MCF 10A (cell line): ENCODE measurements at regions of chr7 and their contacts with region 1.

Region 1: GRCh38 chr7:99558306-99559174 is at the start of gene ZNF655:
- DNase-seq: peak; percentile 85
- H3K4me3 Mint-ChIP-seq: peak within 1 kb of the TSS; percentile 85
- H3K27ac Mint-ChIP-seq: peak within 1 kb of the TSS; percentile 86
- H3K4me1 Mint-ChIP-seq: peaks cover 33% of the 10 kb centered on the region
- H3K27me3 Mint-ChIP-seq: no peaks in the 10 kb centered on the region
- CTCF ChIP-seq: no peak
- total RNA-seq, gene ZNF655: 85.2 and 89.9 TPM in 2 replicates

Region 2: GRCh38 chr7:99465421-99465768 is 93.1 kb before region 1 on chr7:
- CTCF ChIA-PET with region 1: no interaction called
- POLR2A ChIA-PET with region 1: interaction called, 17 read pairs
- intact Hi-C with region 1: no loop called
- DNase-seq: peak; percentile 14
- H3K4me3 Mint-ChIP-seq: peak overlapping the region; percentile 89
- H3K27ac Mint-ChIP-seq: peak overlapping the region; percentile 98
- H3K4me1 Mint-ChIP-seq: peaks cover 15% of the 10 kb centered on the region
- H3K27me3 Mint-ChIP-seq: no peaks in the 10 kb centered on the region
- CTCF ChIP-seq: no peak

Region 3: GRCh38 chr7:99571768-99572167 is 13.2 kb after region 1 on chr7:
- CTCF ChIA-PET with region 1: no interaction called
- POLR2A ChIA-PET with region 1: interaction called, 23 read pairs
- intact Hi-C with region 1: no loop called
- DNase-seq: no peak
- H3K4me3 Mint-ChIP-seq: no peak overlapping the region
- H3K27ac Mint-ChIP-seq: peak overlapping the region; percentile 46
- H3K4me1 Mint-ChIP-seq: no peaks in the 10 kb centered on the region
- H3K27me3 Mint-ChIP-seq: no peaks in the 10 kb centered on the region
- CTCF ChIP-seq: no peak

Region 4: DNA sequence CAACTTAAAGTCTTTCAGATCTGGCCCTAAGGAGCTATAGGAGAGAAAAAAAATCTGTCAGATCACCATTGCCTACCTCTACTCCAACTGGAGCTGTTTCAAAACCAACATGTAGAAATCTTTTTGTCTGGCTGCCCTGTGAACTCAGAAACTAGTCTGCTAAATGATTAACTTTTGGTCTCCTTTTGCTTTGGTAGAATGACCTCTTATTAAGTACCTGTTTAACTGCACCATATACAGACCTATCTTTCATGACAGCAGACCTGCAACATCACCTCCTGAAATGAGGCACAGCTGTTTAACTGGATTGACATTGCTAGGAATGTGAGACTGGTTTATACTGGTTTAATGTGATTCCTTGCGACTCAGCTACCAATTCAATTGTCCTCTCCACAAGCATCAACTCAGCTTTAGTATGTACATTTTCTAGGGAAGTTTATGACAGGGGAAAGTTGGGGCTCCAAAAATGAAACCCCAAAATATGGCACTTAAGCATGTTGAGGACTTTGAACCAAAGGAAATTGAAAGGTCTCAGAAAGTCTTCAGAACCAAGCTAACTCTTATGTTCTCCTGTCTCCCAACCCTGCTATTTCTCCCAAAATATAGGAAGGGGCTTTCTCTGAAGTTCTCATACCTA is 271.1 kb after region 1 on chr7:
- CTCF ChIA-PET with region 1: no interaction called
- POLR2A ChIA-PET with region 1: interaction called, 14 read pairs
- intact Hi-C with region 1: no loop called
- DNase-seq: no peak
- H3K4me3 Mint-ChIP-seq: no peak overlapping the region
- H3K27ac Mint-ChIP-seq: no peak overlapping the region
- H3K4me1 Mint-ChIP-seq: peaks cover 45% of the 10 kb centered on the region
- H3K27me3 Mint-ChIP-seq: no peaks in the 10 kb centered on the region
- CTCF ChIP-seq: no peak